ENCODE measurements at regions of chr2 and their contacts with region 1.

Region 1: DNA sequence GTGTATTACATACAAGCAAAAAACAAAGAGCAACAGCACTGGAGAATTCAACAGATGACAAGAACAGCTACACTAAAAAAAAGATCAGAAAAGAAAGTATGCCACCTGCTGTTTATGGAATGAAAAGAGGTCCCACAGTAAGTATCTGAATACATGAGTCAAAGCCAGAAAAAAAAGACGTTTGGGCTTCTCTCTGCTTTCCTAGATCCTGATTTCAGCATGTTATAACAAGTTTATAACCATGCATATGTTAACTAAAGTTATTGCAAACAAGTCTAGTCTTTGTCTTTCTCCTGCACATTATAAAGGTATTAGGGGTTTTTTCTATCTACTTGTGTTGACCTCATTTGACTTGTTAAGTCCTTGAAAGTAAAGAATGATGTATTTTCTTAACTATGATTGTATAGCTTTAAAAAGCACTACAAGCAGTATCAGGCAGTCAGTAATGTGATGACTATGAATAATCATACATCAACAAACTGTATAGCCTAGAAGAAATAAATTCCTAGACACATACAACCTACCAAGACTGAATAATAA is 108.5 kb upstream of the COL5A2 start:
- DNase-seq: peak; percentile 91
- H3K4me3 ChIP-seq: no peak overlapping the region
- H3K27ac ChIP-seq: no peak overlapping the region
- H3K4me1 ChIP-seq: peaks cover 17% of the 10 kb centered on the region
- H3K27me3 ChIP-seq: no peaks in the 10 kb centered on the region
- CTCF ChIP-seq: peak; percentile 73

Region 2: GRCh38 chr2:188512456-188512855 is 775.6 kb before region 1 on chr2:
- CTCF ChIA-PET with region 1: no interaction called
- POLR2A ChIA-PET with region 1: no interaction called
- intact Hi-C with region 1: no loop called
- DNase-seq: peak; percentile 78
- H3K4me3 ChIP-seq: no peak overlapping the region
- H3K27ac ChIP-seq: no peak overlapping the region
- H3K4me1 ChIP-seq: peaks cover 8% of the 10 kb centered on the region
- H3K27me3 ChIP-seq: no peaks in the 10 kb centered on the region
- CTCF ChIP-seq: peak; percentile 71

Region 3: GRCh38 chr2:189014449-189015138 is 273.5 kb before region 1 on chr2:
- CTCF ChIA-PET with region 1: no interaction called
- POLR2A ChIA-PET with region 1: no interaction called
- intact Hi-C with region 1: no loop called
- DNase-seq: peak; percentile 22
- H3K4me3 ChIP-seq: no peak overlapping the region
- H3K27ac ChIP-seq: peak overlapping the region; percentile 34
- H3K4me1 ChIP-seq: peaks cover 17% of the 10 kb centered on the region
- H3K27me3 ChIP-seq: no peaks in the 10 kb centered on the region
- CTCF ChIP-seq: no peak

Region 4: GRCh38 chr2:189096769-189097447 is 191.1 kb before region 1 on chr2:
- CTCF ChIA-PET with region 1: no interaction called
- POLR2A ChIA-PET with region 1: no interaction called
- intact Hi-C with region 1: loop called (anchors 1 kb)
- DNase-seq: no peak
- H3K4me3 ChIP-seq: no peak overlapping the region
- H3K27ac ChIP-seq: no peak overlapping the region
- H3K4me1 ChIP-seq: peaks cover 7% of the 10 kb centered on the region
- H3K27me3 ChIP-seq: no peaks in the 10 kb centered on the region
- CTCF ChIP-seq: no peak

Region 5: DNA sequence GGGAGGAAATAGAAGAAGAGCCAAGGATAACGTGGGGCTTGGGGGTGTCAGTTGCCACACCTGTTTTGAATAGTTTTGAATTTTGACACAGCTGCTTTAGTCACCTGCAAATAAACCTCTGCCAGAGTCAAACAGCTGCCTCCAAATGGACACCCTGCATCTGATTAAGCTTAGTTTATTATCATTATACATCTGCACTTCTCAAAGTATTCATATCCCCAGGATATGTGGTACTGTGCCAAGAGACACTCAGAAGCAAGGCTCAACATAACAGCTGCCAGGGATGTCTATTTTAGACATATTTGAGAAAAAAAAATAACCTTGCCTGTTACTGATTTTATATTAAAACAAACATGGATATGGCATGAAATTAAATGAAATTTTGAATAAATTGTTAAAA is 30.7 kb after region 1 on chr2:
- CTCF ChIA-PET with region 1: no interaction called
- POLR2A ChIA-PET with region 1: no interaction called
- intact Hi-C with region 1: no loop called
- DNase-seq: no peak
- H3K4me3 ChIP-seq: no peak overlapping the region
- H3K27ac ChIP-seq: no peak overlapping the region
- H3K4me1 ChIP-seq: no peaks in the 10 kb centered on the region
- H3K27me3 ChIP-seq: no peaks in the 10 kb centered on the region
- CTCF ChIP-seq: no peak

Measured in A673 (cell line).